RWPE1 (cell line): ENCODE measurements at regions of chr15 and their contacts with region 1.

Region 1: GRCh38 chr15:64761156-64761555 is 14.2 kb downstream of the RBPMS2 start:
- DNase-seq: no peak
- H3K27ac ChIP-seq: no peak overlapping the region
- CTCF ChIP-seq: no peak

Region 2: DNA sequence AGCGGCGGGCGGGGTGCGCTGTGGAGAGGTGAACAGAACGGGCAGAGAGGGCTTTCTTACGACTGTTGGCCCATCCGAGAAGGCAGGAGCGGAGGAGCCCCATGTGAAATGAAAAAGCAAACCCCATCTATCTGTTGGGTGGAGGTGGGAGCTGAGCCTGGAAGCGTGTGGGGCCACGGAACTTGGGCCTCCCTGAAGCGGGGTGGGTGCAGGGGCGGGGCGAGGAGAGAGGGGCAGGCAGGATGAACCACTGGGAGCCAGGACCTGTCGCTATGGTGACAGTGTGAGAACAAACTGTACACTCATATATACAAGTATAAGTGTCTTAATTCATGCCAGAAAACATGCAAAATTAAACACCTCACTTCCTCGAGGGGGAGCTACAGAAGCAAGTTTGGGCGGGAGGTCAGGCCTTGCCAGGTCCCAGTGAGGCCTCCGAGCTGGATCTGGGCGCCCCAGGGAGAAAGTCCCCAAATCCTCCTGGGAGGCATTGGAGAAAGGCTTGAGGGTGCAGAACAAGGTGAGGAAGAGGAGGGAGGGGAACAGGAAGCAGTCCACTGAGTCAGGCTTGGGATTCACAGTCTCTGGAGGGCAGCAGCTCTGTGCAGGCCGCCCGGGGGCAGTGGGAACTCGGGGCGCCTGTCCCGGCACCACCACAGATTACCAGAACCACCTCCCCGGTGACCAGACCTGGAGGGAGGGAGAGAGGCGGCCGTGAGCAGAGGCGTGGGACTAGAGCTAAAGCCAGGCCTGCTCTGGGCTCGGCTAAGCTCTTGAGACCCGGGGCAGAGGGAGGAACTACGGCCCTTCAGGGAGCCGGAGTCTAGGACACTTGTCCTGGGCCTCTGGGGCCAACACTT is 20.6 kb before region 1 on chr15:
- CTCF ChIA-PET with region 1: no interaction called
- POLR2A ChIA-PET with region 1: no interaction called
- DNase-seq: peak; percentile 27
- H3K27ac ChIP-seq: no peak overlapping the region
- CTCF ChIP-seq: no peak

Region 3: DNA sequence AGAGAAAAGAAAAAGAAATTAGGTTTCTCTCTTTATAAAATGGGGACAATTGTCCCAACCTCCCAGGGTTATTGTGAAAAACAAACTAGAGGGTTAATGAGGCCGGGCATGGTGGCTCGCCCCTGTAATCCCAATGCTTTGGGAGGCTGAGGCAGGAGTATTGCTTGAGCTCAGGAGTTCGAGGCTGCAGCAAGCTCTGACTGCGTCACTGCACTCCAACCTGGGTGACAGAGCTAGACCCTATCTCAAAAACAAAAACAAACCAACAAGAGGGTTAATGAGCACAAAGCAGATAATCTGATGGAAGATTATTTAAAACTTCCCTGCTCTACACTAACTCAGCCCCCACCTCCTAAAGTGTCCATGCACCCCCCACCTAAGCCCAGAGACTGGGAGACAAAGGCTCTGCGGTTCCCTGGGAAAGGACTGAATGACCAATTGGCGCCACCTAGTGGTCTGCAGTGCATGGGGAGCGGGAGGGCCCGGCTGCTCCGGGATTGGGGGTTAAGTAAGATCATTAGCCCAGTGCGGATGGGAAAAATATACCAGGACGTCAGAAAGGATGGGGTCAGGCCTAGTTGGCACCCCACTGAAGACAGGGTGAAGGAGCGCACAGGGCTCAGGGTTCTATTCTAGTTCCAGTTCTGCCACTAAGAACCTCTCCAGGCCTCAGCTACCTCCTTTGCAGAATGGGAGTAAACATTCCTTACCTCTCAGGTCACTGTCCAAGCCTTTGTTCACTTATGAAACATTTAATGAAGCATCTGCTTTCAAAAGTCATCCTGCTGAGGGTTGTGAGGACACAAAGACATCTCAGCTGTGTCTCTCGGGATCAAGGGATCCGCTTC is 48.7 kb after region 1 on chr15:
- CTCF ChIA-PET with region 1: interaction called, 12 read pairs
- POLR2A ChIA-PET with region 1: no interaction called
- DNase-seq: peak; percentile 91
- H3K27ac ChIP-seq: no peak overlapping the region
- CTCF ChIP-seq: peak; percentile 99